Mammary epithelial cell (primary cell): ENCODE measurements at regions of chr2 and their contacts with region 1.

Region 1: DNA sequence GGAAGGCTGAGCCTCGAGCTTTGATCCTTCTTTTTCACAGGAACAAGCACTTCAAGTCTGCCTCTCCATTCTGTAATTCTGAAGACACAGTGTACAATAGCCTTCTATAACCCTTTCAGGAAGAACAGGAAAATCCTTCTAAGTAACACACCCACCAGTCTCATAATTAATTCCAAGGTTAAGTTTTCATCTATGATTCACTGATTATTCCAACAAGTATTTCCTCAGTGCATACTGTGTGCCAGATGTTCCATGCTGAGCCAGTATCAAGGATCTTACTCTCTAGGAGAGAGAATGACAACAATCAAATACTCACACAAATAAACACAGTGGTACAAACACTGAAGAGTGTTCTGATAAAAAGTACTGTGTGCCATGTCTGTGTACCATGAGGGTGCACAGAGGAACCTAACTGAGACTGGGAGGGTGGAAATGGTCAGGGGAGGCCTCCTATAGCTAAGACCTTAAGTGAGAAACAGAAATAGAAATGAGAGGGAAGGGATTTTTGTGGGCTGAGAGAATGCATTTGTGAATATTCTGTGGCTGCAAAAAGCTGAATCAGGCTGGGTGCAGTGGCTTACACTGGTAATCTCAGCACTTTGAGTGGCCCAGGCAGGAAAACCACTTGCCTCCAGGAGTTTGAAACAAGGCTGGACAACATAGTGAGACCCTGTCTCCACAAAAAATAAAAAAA is 7.3 kb upstream of the MTLN start:
- DNase-seq: peak; percentile 62
- H3K4me3 ChIP-seq: no peak overlapping the region
- H3K27ac ChIP-seq: peak overlapping the region; percentile 22
- H3K4me1 ChIP-seq: peaks cover 11% of the 10 kb centered on the region
- H3K27me3 ChIP-seq: no peaks in the 10 kb centered on the region
- CTCF ChIP-seq: no peak

Region 2: GRCh38 chr2:109510136-109511028 is 709.3 kb before region 1 on chr2:
- CTCF ChIA-PET with region 1: no interaction called
- dilution Hi-C with region 1: no loop called
- in situ Hi-C with region 1: no loop called
- intact Hi-C with region 1: no loop called
- DNase-seq: peak; percentile 50
- H3K4me3 ChIP-seq: no peak overlapping the region
- H3K27ac ChIP-seq: no peak overlapping the region
- H3K4me1 ChIP-seq: peaks cover 5% of the 10 kb centered on the region
- H3K27me3 ChIP-seq: no peaks in the 10 kb centered on the region
- CTCF ChIP-seq: peak; percentile 89 to 97

Region 3: GRCh38 chr2:110204780-110205385 is 14.8 kb before region 1 on chr2 and contains the start of gene NPHP1:
- CTCF ChIA-PET with region 1: no interaction called
- dilution Hi-C with region 1: no loop called
- in situ Hi-C with region 1: no loop called
- intact Hi-C with region 1: loop called (anchors 2 kb)
- DNase-seq: peak; percentile 81
- H3K4me3 ChIP-seq: peak within 1 kb of the TSS; percentile 71 to 86 (median 84)
- H3K27ac ChIP-seq: peak within 1 kb of the TSS; percentile 92
- H3K4me1 ChIP-seq: peaks cover 18% of the 10 kb centered on the region
- H3K27me3 ChIP-seq: no peaks in the 10 kb centered on the region
- CTCF ChIP-seq: no peak
- total RNA-seq, gene NPHP1: 5.7 to 7.8 TPM

Region 4: DNA sequence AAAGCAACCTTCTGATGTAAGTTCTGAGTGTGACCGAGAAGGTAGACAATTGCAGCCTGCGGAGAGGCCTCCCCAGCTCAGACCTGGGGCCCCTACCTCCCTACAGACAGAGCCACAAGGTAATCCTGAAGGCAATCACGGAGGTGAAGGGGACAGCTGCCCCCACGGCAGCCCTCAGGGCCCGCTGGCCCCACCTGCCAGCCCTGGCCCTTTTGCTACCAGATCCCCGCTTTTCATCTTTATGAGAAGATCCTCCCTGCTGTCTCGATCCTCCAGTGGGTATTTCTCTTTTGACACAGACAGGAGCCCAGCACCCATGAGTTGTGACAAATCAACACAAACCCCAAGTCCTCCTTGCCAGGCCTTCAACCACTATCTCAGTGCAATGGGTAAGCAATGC is 904.1 kb after region 1 on chr2:
- CTCF ChIA-PET with region 1: no interaction called
- dilution Hi-C with region 1: no loop called
- in situ Hi-C with region 1: no loop called
- intact Hi-C with region 1: no loop called
- DNase-seq: no peak
- H3K4me3 ChIP-seq: no peak overlapping the region
- H3K27ac ChIP-seq: no peak overlapping the region
- H3K4me1 ChIP-seq: peaks cover 19% of the 10 kb centered on the region
- H3K27me3 ChIP-seq: no peaks in the 10 kb centered on the region
- CTCF ChIP-seq: no peak